ENCODE measurements at regions of chr12 and their contacts with region 1.

Region 1: DNA sequence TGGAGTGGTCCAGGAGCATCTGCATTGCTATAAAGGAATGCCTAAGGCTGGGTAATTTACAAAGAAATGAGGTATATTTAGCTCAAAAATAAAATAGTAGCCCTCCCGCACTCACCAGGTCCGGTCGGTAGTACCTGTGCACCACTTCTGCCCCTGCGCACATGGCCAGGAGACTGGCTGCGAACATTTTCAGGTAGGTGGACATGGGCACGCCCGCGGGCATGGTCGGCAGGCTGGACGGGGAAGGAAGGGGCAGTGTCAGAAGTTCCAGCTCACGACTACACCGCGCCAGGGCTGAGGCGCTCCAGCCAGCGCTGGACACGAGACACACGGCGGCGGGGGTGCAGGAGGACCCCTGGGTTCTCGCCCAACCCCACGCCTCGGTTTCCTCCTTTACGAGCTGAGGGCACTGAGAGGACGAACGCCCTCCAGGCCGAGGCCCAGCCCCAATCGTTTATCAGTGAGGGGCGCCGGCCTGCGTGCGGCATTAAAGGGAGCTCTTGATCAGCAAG is 9.1 kb upstream of the TDG start:
- DNase-seq: no peak
- ATAC-seq: peak; percentile 53 to 69

Region 2: GRCh38 chr12:103930034-103930786 is 26.4 kb before region 1 on chr12 and contains the start of gene HSP90B1:
- intact Hi-C with region 1: loop called in 1 of 2 experiments (anchors 1 kb)
- DNase-seq: peak; percentile 100
- ATAC-seq: peak; percentile 92 to 93
- total RNA-seq, gene HSP90B1: 591 to 724 TPM

Region 3: DNA sequence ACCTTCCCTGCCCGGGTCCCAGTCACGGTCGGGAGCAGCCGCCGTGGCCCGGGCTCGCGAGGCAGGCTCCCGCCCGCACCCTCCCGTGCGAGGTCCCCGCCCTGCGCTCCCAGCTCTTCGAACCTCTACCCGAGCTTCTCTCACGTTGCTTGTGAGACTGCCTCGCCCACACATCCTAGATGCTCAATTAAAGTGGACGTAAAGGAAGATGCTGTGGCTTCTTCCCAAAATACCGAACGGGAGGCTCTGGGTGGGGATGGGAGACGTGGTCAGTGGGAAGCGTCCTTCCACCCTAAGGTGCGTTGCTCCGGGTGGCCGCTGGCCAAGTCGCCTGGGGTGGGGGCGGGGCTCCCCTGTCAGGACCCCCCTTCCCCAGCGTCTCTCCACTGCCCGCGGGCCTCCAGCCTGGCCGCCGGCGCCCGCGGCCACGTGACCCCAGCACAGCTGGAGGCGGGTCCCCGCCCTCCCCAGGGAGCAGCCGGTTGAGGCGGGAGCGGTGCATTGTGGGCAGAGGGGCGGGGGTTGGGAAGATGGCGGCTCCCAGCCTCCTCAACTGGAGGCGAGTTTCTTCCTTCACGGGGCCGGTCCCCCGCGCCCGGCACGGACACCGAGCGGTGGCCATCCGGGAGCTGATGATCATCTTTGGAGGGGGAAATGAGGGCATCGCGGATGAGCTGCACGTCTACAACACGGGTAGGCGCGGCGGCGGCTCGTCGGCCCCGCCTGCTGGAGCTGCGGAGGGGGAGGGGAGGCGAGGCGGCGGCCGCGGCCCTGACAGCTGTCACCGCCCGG is 107.7 kb after region 1 on chr12 and contains the start of gene HCFC2:
- intact Hi-C with region 1: loop called in 1 of 2 experiments (anchors 10 kb)
- DNase-seq: peak; percentile 93
- ATAC-seq: peak; percentile 99
- total RNA-seq, gene HCFC2: 9.2 to 10.2 TPM

Measured in left cardiac atrium (tissue), 4 donors.